BJ (cell line): ENCODE measurements at regions of chr4 and their contacts with region 1.

Region 1: DNA sequence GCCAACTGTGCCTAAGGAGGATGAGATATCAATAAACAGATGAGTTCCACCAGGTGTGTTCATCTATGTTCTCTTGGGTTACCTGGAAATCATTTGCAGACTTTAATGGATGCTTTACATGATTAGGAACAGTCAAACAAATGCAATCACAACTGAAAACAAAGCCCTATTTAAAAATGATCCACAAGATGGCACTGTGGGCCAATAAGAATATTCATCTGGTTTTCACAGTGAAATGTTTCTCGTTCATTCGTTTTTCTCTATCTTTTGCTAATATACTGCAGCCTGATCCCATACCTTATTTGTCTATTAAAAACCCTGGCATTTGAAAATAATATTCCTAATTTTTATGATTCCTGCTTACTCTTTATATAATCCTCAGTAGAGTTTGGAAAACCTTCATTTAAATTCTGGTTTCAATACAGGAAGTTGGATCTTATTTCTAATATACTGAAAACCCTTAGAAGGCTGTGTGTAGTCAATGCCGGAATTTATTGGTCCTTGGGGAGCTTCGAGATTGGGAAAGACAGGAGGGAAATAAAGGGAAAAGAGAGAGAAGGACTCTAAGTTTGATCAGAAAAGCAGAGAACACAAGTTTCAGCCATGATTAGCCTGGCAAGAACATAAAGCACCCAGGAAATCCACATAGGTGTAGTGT is 63.8 kb upstream of the TAPT1 start:
- DNase-seq: no peak
- H3K4me3 ChIP-seq: no peak overlapping the region
- H3K27me3 ChIP-seq: peaks cover 6% of the 10 kb centered on the region; the same call in 1 of the 2 replicates
- CTCF ChIP-seq: peak; percentile 55

Region 2: GRCh38 chr4:16302619-16303018 is 12.6 kb after region 1 on chr4:
- CTCF ChIA-PET with region 1: interaction called, 15 read pairs
- POLR2A ChIA-PET with region 1: no interaction called
- DNase-seq: no peak
- H3K4me3 ChIP-seq: no peak overlapping the region
- H3K27me3 ChIP-seq: peaks cover 1% of the 10 kb centered on the region
- CTCF ChIP-seq: no peak

Region 3: DNA sequence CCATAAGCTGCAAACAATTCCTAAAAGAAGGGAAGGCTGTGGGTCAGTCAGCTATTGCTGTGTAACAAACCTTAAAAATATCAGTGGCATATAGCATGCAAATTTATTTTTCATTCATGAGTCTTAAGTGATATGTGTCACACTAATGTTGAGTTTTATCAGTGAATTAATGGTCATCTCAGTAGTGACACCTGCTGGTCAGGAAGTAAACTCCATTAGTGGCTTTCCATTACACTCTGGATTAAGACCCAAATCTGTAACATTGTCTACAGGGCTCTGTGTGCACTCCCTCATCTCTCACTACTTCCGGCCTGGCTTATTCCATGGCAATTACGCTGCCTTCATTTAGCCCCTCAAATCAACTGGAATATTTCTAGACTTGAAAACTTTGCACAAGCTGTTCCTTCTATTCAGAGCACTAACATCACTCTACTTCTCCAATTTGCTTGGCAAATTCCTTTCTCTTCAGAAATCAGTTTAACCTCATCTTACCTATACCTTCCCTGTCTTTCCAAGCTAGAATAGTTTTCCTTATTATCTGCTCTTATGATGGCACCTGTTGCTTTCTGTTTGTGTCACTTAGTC is 153.6 kb after region 1 on chr4:
- CTCF ChIA-PET with region 1: interaction called, 18 read pairs
- POLR2A ChIA-PET with region 1: no interaction called
- DNase-seq: no peak
- H3K4me3 ChIP-seq: no peak overlapping the region
- H3K27me3 ChIP-seq: peaks cover 4% of the 10 kb centered on the region
- CTCF ChIP-seq: peak; percentile 72

Region 4: DNA sequence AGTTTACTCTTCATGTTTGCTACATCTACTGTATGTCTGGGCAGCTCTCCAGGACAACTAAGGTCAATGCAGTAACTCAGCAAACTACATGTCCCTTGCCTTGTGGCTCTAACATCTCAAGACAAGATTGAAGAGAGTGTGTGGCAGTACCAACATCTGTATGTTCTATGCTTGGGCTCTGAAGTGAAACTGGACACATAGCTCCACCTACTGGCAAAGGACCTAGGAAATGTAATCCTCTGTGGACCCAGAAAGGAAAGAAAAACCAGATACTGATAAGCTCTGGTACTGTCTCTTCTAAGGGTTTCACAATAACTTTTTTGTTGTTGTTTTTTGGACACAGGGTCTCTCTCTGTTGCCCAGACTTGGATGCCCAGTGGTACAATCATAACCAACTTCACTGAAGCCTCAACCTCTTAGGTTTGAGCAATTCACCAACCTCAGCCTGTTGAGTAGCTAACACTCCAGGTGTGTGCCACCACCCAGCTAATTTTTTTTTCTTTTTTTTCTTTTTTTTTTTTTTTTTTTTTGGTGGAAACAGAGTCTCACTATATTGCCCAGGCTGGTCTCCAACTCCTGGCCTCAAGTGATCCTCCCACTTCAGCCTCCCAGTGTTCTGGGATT is 1157.8 kb after region 1 on chr4:
- CTCF ChIA-PET with region 1: interaction called, 11 read pairs
- POLR2A ChIA-PET with region 1: no interaction called
- DNase-seq: no peak
- H3K4me3 ChIP-seq: no peak overlapping the region
- H3K27me3 ChIP-seq: no peaks in the 10 kb centered on the region
- CTCF ChIP-seq: peak; percentile 76

Region 5: GRCh38 chr4:17468371-17469221 is 1178.6 kb after region 1 on chr4:
- CTCF ChIA-PET with region 1: interaction called, 31 read pairs
- POLR2A ChIA-PET with region 1: no interaction called
- DNase-seq: no peak
- H3K4me3 ChIP-seq: no peak overlapping the region
- H3K27me3 ChIP-seq: no peaks in the 10 kb centered on the region
- CTCF ChIP-seq: peak; percentile 40; the same call in 1 of the 2 replicates